Upper lobe of right lung (tissue), 1 donor: ENCODE measurements at regions of chrX and their contacts with region 1.

Region 1: DNA sequence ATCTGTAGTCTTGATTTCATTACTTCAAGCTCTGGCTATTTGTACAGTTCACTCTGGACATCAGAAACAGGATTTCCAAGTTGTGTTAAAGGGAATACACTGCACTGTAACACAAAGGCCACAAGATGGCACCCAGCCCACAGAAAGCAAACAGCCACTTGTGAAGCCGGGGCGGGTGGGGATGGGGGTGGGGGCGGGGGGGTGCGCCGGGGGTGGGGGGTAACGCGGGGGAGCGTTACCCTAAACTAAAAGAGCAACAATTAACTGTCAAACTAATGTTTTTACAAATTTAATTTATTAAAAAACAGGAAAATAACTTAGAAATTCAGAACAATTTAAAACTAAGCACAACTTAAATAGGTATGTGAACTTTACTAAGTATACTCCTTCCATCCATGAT is 27.3 kb downstream of the PRDX4 start:
- DNase-seq: no peak
- ATAC-seq: peak; percentile 80
- H3K4me3 ChIP-seq: no peak overlapping the region
- H3K27ac ChIP-seq: no peak overlapping the region
- H3K4me1 ChIP-seq: no peaks in the 10 kb centered on the region
- H3K27me3 ChIP-seq: no peaks in the 10 kb centered on the region
- CTCF ChIP-seq: peak; percentile 42

Region 2: GRCh38 chrX:23890933-23891332 is 196.3 kb after region 1 on chrX:
- intact Hi-C with region 1: no loop called
- DNase-seq: no peak
- ATAC-seq: no peak
- H3K4me3 ChIP-seq: no peak overlapping the region
- H3K27ac ChIP-seq: no peak overlapping the region
- H3K4me1 ChIP-seq: no peaks in the 10 kb centered on the region
- H3K27me3 ChIP-seq: no peaks in the 10 kb centered on the region
- CTCF ChIP-seq: no peak

Region 3: GRCh38 chrX:23907498-23908218 is 213.1 kb after region 1 on chrX and contains the starts of genes APOO and CXorf58:
- intact Hi-C with region 1: loop called (anchors 10 kb)
- DNase-seq: peak; percentile 95
- ATAC-seq: peak; percentile 98
- H3K4me3 ChIP-seq: peak within 1 kb of the TSS; percentile 62
- H3K27ac ChIP-seq: peak within 1 kb of the TSS; percentile 88
- H3K4me1 ChIP-seq: no peaks in the 10 kb centered on the region
- H3K27me3 ChIP-seq: no peaks in the 10 kb centered on the region
- CTCF ChIP-seq: peak; percentile 79
- total RNA-seq, gene APOO: 12.0 TPM
- total RNA-seq, gene CXorf58: not detected